BJ (cell line): ENCODE measurements at regions of chr12 and their contacts with region 1.

Region 1: GRCh38 chr12:2795291-2796186 is 769 bp downstream of the FKBP4 start:
- DNase-seq: no peak
- H3K4me3 ChIP-seq: peak overlapping the region; percentile 65
- H3K27me3 ChIP-seq: no peaks in the 10 kb centered on the region
- CTCF ChIP-seq: no peak

Region 2: GRCh38 chr12:2812290-2813213 is 17.0 kb after region 1 on chr12 and contains the start of gene ITFG2:
- CTCF ChIA-PET with region 1: interaction called, 17 read pairs
- POLR2A ChIA-PET with region 1: interaction called, 3 read pairs
- DNase-seq: peak; percentile 90
- H3K4me3 ChIP-seq: peak within 1 kb of the TSS; percentile 86
- H3K27me3 ChIP-seq: no peaks in the 10 kb centered on the region
- CTCF ChIP-seq: no peak
- polyA plus RNA-seq, gene ITFG2: 21.9 and 27.6 TPM in 2 replicates